Activated B cell treated with CpG ODN at 0.5 μM for 24 hours (primary cell): ENCODE measurements at regions of chr13 and their contacts with region 1.

Region 1: DNA sequence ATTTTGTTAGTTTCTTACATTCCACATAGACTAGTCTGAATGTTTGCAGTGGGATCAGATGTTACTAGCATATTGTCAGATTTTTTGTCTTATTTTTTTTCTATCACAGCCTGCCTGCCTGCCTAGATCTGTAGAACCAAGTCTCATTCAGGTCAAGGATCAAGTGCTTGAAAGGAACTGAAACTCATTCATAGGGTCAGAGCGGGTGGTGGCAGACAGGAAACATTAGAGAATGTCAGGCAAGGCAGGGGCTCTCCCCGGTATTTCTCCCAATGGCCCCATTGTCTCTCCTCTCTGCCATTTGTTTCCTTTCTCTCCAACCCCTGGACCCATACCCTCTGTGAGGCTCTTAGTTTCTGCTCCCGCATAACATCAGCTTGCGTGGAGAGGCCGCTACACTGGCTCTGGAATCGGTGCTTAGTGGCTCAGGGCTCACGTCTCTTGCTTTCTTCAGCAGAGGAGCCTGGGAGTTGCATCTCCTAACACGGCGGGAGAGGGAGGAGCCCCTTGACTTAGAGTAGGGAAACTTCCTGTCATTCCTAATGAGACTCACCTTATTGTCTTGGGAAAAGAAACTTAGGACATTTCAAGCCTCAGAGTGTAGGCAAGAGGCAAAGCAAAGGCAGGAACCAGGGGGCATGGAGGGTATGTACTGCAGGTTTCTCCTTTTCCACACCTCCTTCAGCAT is 35.6 kb upstream of the SPATA13 start:
- DNase-seq: peak; percentile 18
- ATAC-seq: peak; percentile 93
- H3K4me3 Mint-ChIP-seq: no peak overlapping the region
- H3K27ac Mint-ChIP-seq: no peak overlapping the region
- H3K4me1 Mint-ChIP-seq: peaks cover 15% of the 10 kb centered on the region
- H3K27me3 Mint-ChIP-seq: peaks cover 32% of the 10 kb centered on the region
- CTCF ChIP-seq: no peak

Region 2: GRCh38 chr13:24063281-24063877 is 61.6 kb before region 1 on chr13:
- CTCF ChIA-PET with region 1: no interaction called
- POLR2A ChIA-PET with region 1: no interaction called
- intact Hi-C with region 1: loop called (anchors 5 kb)
- DNase-seq: no peak
- ATAC-seq: no peak
- H3K4me3 Mint-ChIP-seq: no peak overlapping the region
- H3K27ac Mint-ChIP-seq: no peak overlapping the region
- H3K4me1 Mint-ChIP-seq: peaks cover 5% of the 10 kb centered on the region
- H3K27me3 Mint-ChIP-seq: peaks cover 6% of the 10 kb centered on the region
- CTCF ChIP-seq: no peak